ENCODE measurements at regions of chr10 and their contacts with region 1.

Region 1: DNA sequence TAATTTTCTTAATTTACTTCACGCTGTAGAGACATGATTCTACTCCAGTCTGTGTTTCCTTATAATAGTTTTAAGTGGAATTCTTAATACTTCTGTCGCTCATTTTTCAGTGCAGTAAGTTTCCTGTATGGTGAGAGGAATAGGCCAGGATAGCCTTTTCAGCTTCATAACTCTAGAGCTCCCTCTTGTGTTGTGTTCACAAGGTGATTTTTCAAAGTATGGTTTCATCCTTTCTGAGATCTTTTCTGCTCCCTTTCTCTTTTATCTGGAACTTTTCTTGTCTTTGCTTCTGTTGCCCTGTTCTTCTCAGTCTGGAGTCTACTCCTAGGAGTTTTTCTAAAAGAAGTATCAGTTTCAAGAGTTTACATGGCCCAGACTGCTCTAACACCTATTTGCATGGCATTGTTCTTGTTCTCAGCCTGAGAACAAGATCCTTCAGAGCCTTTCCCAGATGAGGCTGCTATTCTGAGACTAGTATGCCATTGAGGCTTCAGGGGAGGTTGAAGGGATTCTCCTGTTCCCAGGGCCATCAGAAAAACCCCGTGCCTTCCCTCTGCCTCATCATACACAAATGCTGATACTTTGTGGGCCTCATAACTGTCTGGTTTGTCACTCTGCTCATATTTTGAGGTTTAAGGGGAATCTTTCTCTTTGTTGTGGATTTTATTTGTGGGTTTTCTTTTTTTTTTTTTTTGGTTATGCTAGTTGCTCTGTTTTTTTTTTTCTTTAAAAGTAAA is 21.8 kb downstream of the NET1 start:
- DNase-seq: no peak
- H3K4me3 Mint-ChIP-seq: no peak overlapping the region
- H3K27ac Mint-ChIP-seq: no peak overlapping the region
- H3K4me1 Mint-ChIP-seq: peaks cover 17% of the 10 kb centered on the region
- H3K27me3 Mint-ChIP-seq: no peaks in the 10 kb centered on the region

Region 2: DNA sequence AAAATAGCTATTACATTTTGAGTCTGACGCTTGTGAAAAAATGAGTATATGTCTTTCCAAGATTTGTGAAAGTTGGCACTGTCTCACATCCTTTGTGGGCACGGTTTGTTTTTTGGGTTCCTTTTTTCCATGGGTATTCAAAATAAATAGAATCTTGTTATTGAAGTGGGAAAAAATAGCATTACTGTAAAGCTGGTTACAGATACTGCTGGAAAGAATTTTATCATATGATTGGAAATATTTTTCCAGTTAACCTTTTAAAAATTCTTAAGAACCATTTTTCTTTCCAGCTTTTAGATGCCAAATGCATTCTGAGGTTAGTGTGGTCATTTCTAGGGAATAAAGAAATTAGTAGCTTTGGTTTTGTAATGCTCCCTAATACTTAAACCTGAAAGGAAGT is 10.4 kb before region 1 on chr10:
- CTCF ChIA-PET with region 1: interaction called, 29 read pairs
- POLR2A ChIA-PET with region 1: interaction called, 3 read pairs
- intact Hi-C with region 1: no loop called
- DNase-seq: no peak
- H3K4me3 Mint-ChIP-seq: no peak overlapping the region
- H3K27ac Mint-ChIP-seq: no peak overlapping the region
- H3K4me1 Mint-ChIP-seq: peaks cover 3% of the 10 kb centered on the region
- H3K27me3 Mint-ChIP-seq: no peaks in the 10 kb centered on the region

Measured in activated CD4-positive, alpha-beta memory T cell treated with anti-CD3 and anti-CD28 coated beads for 36 hours (primary cell).